ENCODE measurements at regions of chr14 and their contacts with region 1.

Region 1: GRCh38 chr14:100192672-100193416 is 33.4 kb upstream of the DEGS2 start:
- DNase-seq: peak; percentile 99 to 100 (median 100)
- H3K4me3 ChIP-seq: peak overlapping the region; percentile 47
- H3K4me3 Mint-ChIP-seq: peak overlapping the region; percentile 48 to 82 (median 68)
- H3K27ac ChIP-seq: peak overlapping the region; percentile 75
- H3K27ac Mint-ChIP-seq: peak overlapping the region; percentile 89 to 95 (median 91)
- H3K4me1 ChIP-seq: peaks cover 13% of the 10 kb centered on the region
- H3K4me1 Mint-ChIP-seq: peaks cover 10 to 13% (median 12%) of the 10 kb centered on the region in 3 donors
- H3K27me3 ChIP-seq: no peaks in the 10 kb centered on the region
- H3K27me3 Mint-ChIP-seq: no peaks in the 10 kb centered on the region

Region 2: DNA sequence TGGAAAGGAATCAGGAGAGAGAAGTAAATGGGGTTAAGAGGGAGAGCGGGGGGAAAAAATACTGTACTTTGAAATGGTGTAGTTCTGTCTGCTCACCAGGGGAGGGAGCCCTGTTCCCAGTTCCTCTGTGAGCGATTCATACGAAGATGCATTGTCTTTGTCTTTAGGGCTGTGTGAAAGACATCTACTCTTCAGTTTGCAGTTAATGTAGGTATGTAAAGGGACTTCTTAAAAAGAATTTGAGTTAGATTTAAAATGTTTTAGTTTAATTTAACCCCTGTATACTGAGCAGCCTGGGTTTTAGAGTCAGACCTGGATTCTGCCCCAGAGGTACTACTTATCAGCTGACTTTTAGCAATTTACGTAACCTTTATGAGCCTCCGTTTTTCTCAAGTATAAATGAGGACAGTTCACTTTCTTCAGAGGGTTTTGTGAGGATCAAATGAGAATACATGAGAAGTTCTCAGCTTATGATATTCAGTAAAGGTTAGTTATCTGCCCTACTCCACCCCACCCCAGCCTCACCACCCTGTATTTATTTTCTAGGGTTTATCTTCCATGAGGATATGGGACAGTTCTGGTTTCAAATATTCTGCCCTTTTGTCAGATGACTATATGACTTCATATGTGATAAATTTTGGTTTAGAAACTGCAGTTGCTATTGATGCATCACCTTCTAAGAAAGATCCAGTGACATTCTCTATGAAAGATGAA is 210.2 kb before region 1 on chr14:
- CTCF ChIA-PET with region 1: interaction called, 69 read pairs
- POLR2A ChIA-PET with region 1: interaction called, 4 read pairs
- DNase-seq: peak; percentile 45 to 76 (median 62)
- H3K4me3 ChIP-seq: no peak overlapping the region
- H3K4me3 Mint-ChIP-seq: no peak overlapping the region
- H3K27ac ChIP-seq: no peak overlapping the region
- H3K27ac Mint-ChIP-seq: no peak overlapping the region
- H3K4me1 ChIP-seq: peaks cover 12% of the 10 kb centered on the region
- H3K4me1 Mint-ChIP-seq: peaks cover 4 to 10% (median 5%) of the 10 kb centered on the region in 3 donors
- H3K27me3 ChIP-seq: no peaks in the 10 kb centered on the region
- H3K27me3 Mint-ChIP-seq: no peaks in the 10 kb centered on the region

Region 3: GRCh38 chr14:100067971-100068959 is 124.6 kb before region 1 on chr14:
- CTCF ChIA-PET with region 1: interaction called, 60 read pairs
- POLR2A ChIA-PET with region 1: no interaction called
- DNase-seq: peak; percentile 83 to 97 (median 93)
- H3K4me3 ChIP-seq: peak overlapping the region; percentile 87
- H3K4me3 Mint-ChIP-seq: peak overlapping the region; percentile 84 to 100 (median 99)
- H3K27ac ChIP-seq: peak overlapping the region; percentile 84
- H3K27ac Mint-ChIP-seq: peak overlapping the region; percentile 90 to 100 (median 99)
- H3K4me1 ChIP-seq: peaks cover 69% of the 10 kb centered on the region
- H3K4me1 Mint-ChIP-seq: peaks cover 75 to 83% (median 80%) of the 10 kb centered on the region in 3 donors
- H3K27me3 ChIP-seq: no peaks in the 10 kb centered on the region
- H3K27me3 Mint-ChIP-seq: peaks cover 0 to 2% of the 10 kb centered on the region in 2 donors

Region 4: DNA sequence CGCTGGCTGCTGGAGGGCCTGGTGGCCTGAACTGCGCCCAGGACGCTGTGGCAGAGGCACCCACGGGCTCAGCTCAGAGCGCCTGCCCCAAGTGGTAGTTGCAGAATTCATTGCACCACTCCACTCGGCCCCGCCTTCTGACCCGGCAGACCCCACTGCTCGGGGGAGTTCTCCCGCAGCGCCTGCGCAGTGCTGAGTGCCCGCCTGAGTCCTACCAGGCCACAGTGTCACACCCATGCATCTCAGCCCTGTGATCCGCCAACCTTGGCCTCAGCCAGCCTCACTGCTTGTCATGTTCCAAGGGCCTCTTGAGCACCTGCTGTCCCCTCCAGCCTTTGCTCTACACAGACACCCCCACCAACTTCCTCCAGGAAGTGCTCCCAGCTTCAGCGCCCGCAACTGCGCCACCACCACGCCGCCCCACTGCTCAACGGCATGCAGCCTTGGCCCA is 45.6 kb before region 1 on chr14:
- CTCF ChIA-PET with region 1: interaction called, 15 read pairs
- POLR2A ChIA-PET with region 1: no interaction called
- DNase-seq: peak; percentile 57 to 88 (median 73)
- H3K4me3 ChIP-seq: peak overlapping the region; percentile 28
- H3K4me3 Mint-ChIP-seq: peak overlapping the region; percentile 29 to 81 (median 75)
- H3K27ac ChIP-seq: no peak overlapping the region
- H3K27ac Mint-ChIP-seq: peak overlapping the region in 7 of 8 donors; percentile 76 to 88 (median 84)
- H3K4me1 ChIP-seq: peaks cover 19% of the 10 kb centered on the region
- H3K4me1 Mint-ChIP-seq: peaks cover 18 to 31% (median 22%) of the 10 kb centered on the region in 3 donors
- H3K27me3 ChIP-seq: no peaks in the 10 kb centered on the region
- H3K27me3 Mint-ChIP-seq: peaks cover 0 to 4% of the 10 kb centered on the region in 2 donors

Region 5: DNA sequence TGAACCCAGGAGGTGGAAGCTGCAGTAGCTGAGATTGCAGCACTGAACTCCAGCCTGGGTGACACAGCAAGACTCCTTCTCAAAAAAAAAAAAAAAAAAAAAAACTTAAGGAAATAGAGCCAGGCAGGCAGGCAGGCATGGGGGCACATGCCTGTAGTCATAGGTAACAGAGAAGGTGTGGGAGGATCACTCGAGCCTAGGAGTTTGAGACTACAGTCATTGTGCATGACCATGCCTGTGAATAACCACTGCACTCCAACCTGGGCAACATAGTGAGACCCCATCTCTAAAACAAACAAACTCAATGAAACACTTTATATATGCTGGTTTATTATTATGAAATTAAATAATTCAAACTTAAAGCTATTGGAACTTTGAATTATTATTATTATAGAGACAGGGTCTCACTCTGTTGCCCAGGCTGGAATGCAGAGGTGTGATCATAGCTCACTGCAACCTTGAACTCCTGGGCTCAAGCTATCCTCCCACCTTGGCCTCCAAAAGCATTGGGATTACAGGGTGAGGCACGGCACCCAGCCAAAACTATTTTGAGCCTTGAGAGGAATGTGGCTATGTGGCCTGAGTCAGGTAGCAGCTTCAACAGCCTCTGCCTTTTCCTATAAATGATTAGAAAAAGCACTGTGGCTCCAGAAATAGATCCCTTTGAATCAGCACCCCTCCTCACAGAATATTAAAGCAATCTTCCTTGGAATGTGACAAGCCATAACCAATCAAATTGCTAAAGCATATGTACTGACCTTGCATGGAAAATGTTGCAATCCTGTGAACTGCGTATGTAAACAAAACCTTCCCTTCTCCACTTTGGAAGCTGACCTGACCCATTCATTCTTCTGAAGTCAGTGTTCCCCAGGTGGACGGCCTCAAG is 11.3 kb after region 1 on chr14:
- CTCF ChIA-PET with region 1: interaction called, 16 read pairs
- POLR2A ChIA-PET with region 1: no interaction called
- DNase-seq: no peak
- H3K4me3 ChIP-seq: no peak overlapping the region
- H3K4me3 Mint-ChIP-seq: no peak overlapping the region
- H3K27ac ChIP-seq: no peak overlapping the region
- H3K27ac Mint-ChIP-seq: no peak overlapping the region
- H3K4me1 ChIP-seq: no peaks in the 10 kb centered on the region
- H3K4me1 Mint-ChIP-seq: no peaks in the 10 kb centered on the region
- H3K27me3 ChIP-seq: no peaks in the 10 kb centered on the region
- H3K27me3 Mint-ChIP-seq: peaks cover 0 to 4% of the 10 kb centered on the region in 2 donors

Region 6: GRCh38 chr14:100239840-100240724 is 47.2 kb after region 1 on chr14:
- CTCF ChIA-PET with region 1: interaction called, 39 read pairs
- POLR2A ChIA-PET with region 1: interaction called, 3 read pairs
- DNase-seq: peak; percentile 81 to 90 (median 84)
- H3K4me3 ChIP-seq: peak overlapping the region; percentile 72
- H3K4me3 Mint-ChIP-seq: peak overlapping the region; percentile 90 to 100 (median 93)
- H3K27ac ChIP-seq: peak overlapping the region; percentile 62
- H3K27ac Mint-ChIP-seq: peak overlapping the region; percentile 92 to 100 (median 96)
- H3K4me1 ChIP-seq: peaks cover 63% of the 10 kb centered on the region
- H3K4me1 Mint-ChIP-seq: peaks cover 49 to 70% (median 67%) of the 10 kb centered on the region in 3 donors
- H3K27me3 ChIP-seq: no peaks in the 10 kb centered on the region
- H3K27me3 Mint-ChIP-seq: peaks cover 0 to 1% of the 10 kb centered on the region in 2 donors

Region 7: DNA sequence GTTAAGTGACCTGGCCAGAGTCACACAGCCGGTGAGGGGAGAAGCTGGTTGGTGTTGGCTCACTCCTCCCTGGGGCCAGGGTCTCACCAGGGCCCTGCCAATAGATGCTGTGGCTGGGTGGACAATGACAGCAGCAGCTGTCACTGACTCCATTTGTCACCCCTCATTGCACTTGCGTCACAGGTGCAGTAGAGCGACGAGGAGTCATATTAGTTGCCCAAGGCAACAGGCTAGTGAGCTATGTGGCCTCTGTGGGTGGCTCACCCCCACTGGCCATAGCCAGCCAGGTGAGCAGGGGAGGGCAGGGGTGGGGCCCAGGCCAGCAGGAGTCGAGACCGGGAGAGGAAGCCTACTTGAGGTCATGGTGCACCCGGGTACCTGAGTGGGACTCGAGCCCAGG is 140.0 kb after region 1 on chr14:
- CTCF ChIA-PET with region 1: no interaction called
- POLR2A ChIA-PET with region 1: no interaction called
- DNase-seq: peak in 1 of 5 donors; percentile 36
- H3K4me3 ChIP-seq: no peak overlapping the region
- H3K4me3 Mint-ChIP-seq: no peak overlapping the region
- H3K27ac ChIP-seq: no peak overlapping the region
- H3K27ac Mint-ChIP-seq: peak overlapping the region in 1 of 8 donors; percentile 19
- H3K4me1 ChIP-seq: no peaks in the 10 kb centered on the region
- H3K4me1 Mint-ChIP-seq: no peaks in the 10 kb centered on the region
- H3K27me3 ChIP-seq: no peaks in the 10 kb centered on the region
- H3K27me3 Mint-ChIP-seq: peaks cover 0 to 1% of the 10 kb centered on the region in 2 donors

Region 8: DNA sequence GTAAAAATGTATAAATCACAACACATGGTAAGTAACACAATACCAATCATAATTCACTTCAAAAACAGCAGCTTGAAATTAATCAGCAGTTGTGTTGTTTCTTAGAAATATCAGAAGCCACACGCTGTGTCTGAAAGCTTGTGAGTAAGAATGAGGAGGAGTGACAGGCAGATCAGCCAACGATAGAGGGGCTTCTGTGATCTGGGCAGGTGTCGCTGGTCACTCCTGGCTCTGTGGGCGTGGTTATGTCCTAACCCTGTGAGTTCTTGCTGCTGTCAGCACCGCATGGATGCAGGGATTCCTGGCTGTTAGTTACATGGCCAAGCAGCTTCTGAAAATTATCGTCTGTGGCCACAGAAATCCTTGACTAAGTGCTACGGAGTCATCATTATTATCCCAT is 253.7 kb after region 1 on chr14:
- CTCF ChIA-PET with region 1: no interaction called
- POLR2A ChIA-PET with region 1: no interaction called
- DNase-seq: no peak
- H3K4me3 ChIP-seq: no peak overlapping the region
- H3K4me3 Mint-ChIP-seq: no peak overlapping the region
- H3K27ac ChIP-seq: no peak overlapping the region
- H3K27ac Mint-ChIP-seq: no peak overlapping the region
- H3K4me1 ChIP-seq: no peaks in the 10 kb centered on the region
- H3K4me1 Mint-ChIP-seq: peaks cover 7 to 12% (median 9%) of the 10 kb centered on the region in 3 donors
- H3K27me3 ChIP-seq: no peaks in the 10 kb centered on the region
- H3K27me3 Mint-ChIP-seq: no peaks in the 10 kb centered on the region